Sciatic nerve (tissue), 2 donors: ENCODE measurements at regions of chr2 and their contacts with region 1.

Region 1: GRCh38 chr2:20440001-20440560 is 6.8 kb upstream of the RHOB start:
- DNase-seq: no peak
- ATAC-seq: no peak

Region 2: GRCh38 chr2:20635675-20636584 is 195.8 kb after region 1 on chr2:
- intact Hi-C with region 1: loop called (anchors 2 kb)
- DNase-seq: peak; percentile 94
- ATAC-seq: peak; percentile 93